ENCODE measurements at regions of chr16 and their contacts with region 1.

Region 1: GRCh38 chr16:21277927-21278706 is at the start of gene CRYM:
- DNase-seq: peak; percentile 49
- H3K4me3 ChIP-seq: peak within 1 kb of the TSS; percentile 28
- H3K27ac ChIP-seq: no peak within 1 kb of the TSS
- H3K4me1 ChIP-seq: no peaks in the 10 kb centered on the region
- H3K27me3 ChIP-seq: peaks cover 79% of the 10 kb centered on the region
- CTCF ChIP-seq: peak; percentile 79
- total RNA-seq, gene CRYM: not detected in 2 replicates

Region 2: GRCh38 chr16:21199607-21200218 is 78.4 kb before region 1 on chr16:
- CTCF ChIA-PET with region 1: no interaction called
- POLR2A ChIA-PET with region 1: interaction called, 10 read pairs
- intact Hi-C with region 1: no loop called
- DNase-seq: no peak
- H3K4me3 ChIP-seq: no peak overlapping the region
- H3K27ac ChIP-seq: no peak overlapping the region
- H3K4me1 ChIP-seq: no peaks in the 10 kb centered on the region
- H3K27me3 ChIP-seq: peaks cover 47% of the 10 kb centered on the region
- CTCF ChIP-seq: no peak